RWPE1 (cell line): ENCODE measurements at regions of chr15 and their contacts with region 1.

Region 1: DNA sequence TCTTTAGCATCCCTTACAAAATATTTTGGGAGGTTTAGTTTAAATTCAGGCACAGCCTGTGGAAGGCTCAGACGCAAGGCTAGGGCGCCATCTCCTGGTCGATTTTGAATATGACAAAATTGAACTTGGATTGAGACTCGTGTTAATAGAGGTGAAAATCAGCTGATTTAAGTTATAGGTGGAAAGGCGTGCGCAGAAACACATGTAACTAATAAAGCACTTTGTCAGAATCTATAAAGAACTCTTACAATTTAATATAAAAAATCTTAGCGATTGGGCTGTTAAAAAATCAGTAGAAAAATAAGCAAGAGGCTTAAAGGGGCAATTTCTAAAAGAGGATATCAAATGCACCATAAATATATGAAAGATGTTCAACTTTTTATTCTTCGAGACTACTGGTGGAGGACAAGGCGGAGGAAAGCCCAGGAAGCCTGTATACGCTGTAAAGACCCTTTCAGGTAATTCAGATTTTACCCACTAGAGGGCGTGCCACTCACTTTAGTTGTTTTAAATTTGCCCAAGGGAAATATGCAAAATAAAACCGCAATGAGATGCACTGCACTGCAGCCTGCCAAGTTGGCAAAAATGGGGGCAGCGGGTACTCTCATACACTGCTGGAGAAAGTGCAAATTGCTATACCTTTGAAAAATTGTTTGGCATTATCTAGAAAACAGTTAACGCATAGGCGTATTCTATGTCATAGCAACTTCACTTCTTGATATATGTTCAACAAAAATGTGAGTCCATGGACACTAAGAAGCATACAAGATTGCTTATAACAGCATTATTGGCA is 64.7 kb downstream of the SLC30A4 start:
- DNase-seq: peak; percentile 68
- H3K27ac ChIP-seq: no peak overlapping the region; the same call in 1 of the 2 replicates
- CTCF ChIP-seq: peak; percentile 91

Region 2: DNA sequence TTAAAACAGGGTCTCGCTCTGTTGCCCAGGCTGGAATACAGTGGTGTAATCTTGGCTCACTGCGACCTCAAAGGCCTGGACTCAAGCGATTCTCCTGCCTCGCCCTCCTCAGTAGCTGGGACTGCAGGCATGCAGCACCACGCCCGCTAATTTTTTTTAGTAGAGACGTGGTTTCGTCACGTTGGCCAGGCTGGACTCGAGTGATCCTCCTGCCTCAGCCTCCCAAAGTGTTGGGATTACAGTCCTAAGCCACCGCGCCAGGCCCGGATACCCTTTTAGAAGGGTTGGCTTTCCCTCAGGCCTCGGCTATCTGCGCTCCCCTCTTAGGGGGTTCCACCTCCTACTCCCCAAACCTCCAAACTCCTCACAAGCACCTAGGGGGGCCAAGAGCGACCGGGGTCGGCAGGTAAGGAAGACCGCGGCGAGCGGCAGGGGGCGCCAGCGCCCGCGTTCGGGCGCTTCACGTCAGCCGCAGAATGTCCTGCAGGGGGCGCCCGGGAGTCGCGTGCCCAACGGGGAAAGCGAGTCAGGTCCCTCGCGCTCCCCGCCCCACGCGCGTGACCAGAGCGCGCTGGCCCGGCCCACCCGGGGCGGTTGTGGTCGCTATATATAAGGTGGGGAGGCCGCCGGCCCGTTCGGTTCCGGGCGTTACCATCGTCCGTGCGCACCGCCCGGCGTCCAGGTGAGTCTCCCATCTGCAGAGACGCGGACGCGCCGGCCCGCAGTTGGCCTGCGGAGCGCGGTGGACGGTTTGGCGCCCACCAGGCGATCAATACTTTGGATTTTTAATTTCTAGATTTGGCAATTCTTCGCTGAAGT is 27.7 kb before region 1 on chr15:
- CTCF ChIA-PET with region 1: interaction called, 72 read pairs
- POLR2A ChIA-PET with region 1: no interaction called
- DNase-seq: peak; percentile 74
- H3K27ac ChIP-seq: no peak overlapping the region
- CTCF ChIP-seq: peak; percentile 100

Region 3: GRCh38 chr15:45439521-45440260 is 18.1 kb before region 1 on chr15:
- CTCF ChIA-PET with region 1: interaction called, 19 read pairs
- POLR2A ChIA-PET with region 1: no interaction called
- DNase-seq: no peak
- H3K27ac ChIP-seq: no peak overlapping the region
- CTCF ChIP-seq: no peak

Region 4: GRCh38 chr15:45587095-45587860 is 129.4 kb after region 1 on chr15 and contains the start of gene BLOC1S6:
- CTCF ChIA-PET with region 1: interaction called, 22 read pairs
- POLR2A ChIA-PET with region 1: no interaction called
- DNase-seq: peak; percentile 81
- H3K27ac ChIP-seq: peak within 1 kb of the TSS; percentile 92
- CTCF ChIP-seq: no peak

Region 5: DNA sequence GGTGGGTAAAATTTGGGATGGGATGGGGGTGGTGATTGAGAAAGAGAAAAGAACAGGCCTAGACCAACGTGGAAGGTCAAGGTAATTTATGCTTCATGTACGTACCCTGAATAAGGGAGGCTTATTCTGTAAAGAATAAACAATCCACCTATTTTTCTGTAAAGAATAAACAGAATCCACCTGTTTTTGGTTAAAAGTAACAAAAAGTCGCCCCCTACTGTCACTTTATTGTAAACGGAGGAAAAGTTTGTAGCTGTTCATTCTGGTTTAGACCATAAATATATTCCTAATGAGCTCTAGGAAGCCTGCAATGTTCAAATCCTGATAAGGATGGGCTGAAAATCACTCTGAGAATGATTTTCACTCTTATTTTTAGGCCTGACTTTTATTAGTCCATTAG is 153.5 kb after region 1 on chr15:
- CTCF ChIA-PET with region 1: interaction called, 40 read pairs
- POLR2A ChIA-PET with region 1: no interaction called
- DNase-seq: peak; percentile 28
- H3K27ac ChIP-seq: no peak overlapping the region
- CTCF ChIP-seq: peak; percentile 52; the same call in 1 of the 2 replicates

Region 6: DNA sequence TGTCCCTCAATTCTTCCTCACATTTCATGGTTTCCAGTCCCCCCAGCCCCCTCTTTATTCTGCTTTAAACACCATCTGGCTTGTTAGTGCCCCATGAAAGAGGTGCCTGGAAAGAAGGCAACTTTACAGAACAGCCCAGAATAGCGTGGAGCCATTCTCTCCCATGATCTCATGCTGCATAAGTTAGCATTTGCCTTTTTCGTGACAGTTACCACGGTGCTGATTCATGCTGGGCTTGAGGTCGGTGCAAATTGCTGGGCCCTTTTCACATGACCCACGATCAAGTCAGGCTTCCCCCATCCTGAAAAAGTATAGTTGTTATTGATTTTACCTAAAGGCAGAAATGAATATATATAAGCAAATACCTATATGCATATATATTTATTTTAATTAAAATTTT is 206.6 kb after region 1 on chr15:
- CTCF ChIA-PET with region 1: no interaction called
- POLR2A ChIA-PET with region 1: no interaction called
- DNase-seq: no peak
- H3K27ac ChIP-seq: no peak overlapping the region
- CTCF ChIP-seq: no peak